IMR-90 (cell line): ENCODE measurements at regions of chr1 and their contacts with region 1.

Region 1: GRCh38 chr1:22976461-22977243 is 4.0 kb upstream of the LACTBL1 start:
- DNase-seq: peak; percentile 85
- ATAC-seq: peak; percentile 98
- H3K4me3 ChIP-seq: no peak overlapping the region
- H3K27ac ChIP-seq: no peak overlapping the region
- H3K4me1 ChIP-seq: no peaks in the 10 kb centered on the region; the same call in 1 of the 2 replicates
- H3K27me3 ChIP-seq: peaks cover 28% of the 10 kb centered on the region
- CTCF ChIP-seq: peak; percentile 88
- POLR2A ChIP-seq: 0 out of 2 replicates have a peak, but pooled peaks have one; percentile 33
- RAD21 ChIP-seq: peak; percentile 92

Region 2: DNA sequence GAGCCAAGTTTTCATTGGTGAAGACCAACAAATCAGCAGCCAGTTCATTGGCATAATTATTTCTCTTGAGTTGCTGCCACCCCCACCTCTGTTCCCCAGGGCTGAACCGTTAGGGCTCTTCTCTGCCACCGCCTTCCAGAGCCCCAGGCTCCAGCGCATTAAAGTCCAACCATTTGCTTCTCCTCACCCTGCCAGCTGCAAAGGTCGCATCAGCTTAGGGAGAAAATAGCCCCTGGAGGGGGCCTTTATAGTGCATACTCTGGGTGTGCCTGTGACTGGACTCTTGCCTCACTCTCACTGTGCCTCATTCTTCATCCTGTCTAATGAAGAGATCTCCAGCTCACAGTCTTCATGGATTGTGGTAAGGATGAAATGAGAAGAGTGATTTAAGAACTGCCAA is 93.0 kb after region 1 on chr1:
- CTCF ChIA-PET with region 1: no interaction called
- POLR2A ChIA-PET with region 1: no interaction called
- dilution Hi-C with region 1: no loop called
- in situ Hi-C with region 1: no loop called
- intact Hi-C with region 1: loop called (anchors 5 kb)
- DNase-seq: no peak
- ATAC-seq: no peak
- H3K4me3 ChIP-seq: no peak overlapping the region
- H3K27ac ChIP-seq: no peak overlapping the region
- H3K4me1 ChIP-seq: no peaks in the 10 kb centered on the region
- H3K27me3 ChIP-seq: no peaks in the 10 kb centered on the region
- CTCF ChIP-seq: no peak
- POLR2A ChIP-seq: no peak
- RAD21 ChIP-seq: no peak

Region 3: GRCh38 chr1:23092447-23092846 is 115.8 kb after region 1 on chr1:
- CTCF ChIA-PET with region 1: no interaction called
- POLR2A ChIA-PET with region 1: no interaction called
- dilution Hi-C with region 1: no loop called
- in situ Hi-C with region 1: no loop called
- intact Hi-C with region 1: no loop called
- DNase-seq: no peak
- ATAC-seq: no peak
- H3K4me3 ChIP-seq: no peak overlapping the region
- H3K27ac ChIP-seq: no peak overlapping the region
- H3K4me1 ChIP-seq: peaks cover 2% of the 10 kb centered on the region; the same call in 1 of the 2 replicates
- H3K27me3 ChIP-seq: no peaks in the 10 kb centered on the region
- CTCF ChIP-seq: no peak
- POLR2A ChIP-seq: no peak
- RAD21 ChIP-seq: no peak

Region 4: DNA sequence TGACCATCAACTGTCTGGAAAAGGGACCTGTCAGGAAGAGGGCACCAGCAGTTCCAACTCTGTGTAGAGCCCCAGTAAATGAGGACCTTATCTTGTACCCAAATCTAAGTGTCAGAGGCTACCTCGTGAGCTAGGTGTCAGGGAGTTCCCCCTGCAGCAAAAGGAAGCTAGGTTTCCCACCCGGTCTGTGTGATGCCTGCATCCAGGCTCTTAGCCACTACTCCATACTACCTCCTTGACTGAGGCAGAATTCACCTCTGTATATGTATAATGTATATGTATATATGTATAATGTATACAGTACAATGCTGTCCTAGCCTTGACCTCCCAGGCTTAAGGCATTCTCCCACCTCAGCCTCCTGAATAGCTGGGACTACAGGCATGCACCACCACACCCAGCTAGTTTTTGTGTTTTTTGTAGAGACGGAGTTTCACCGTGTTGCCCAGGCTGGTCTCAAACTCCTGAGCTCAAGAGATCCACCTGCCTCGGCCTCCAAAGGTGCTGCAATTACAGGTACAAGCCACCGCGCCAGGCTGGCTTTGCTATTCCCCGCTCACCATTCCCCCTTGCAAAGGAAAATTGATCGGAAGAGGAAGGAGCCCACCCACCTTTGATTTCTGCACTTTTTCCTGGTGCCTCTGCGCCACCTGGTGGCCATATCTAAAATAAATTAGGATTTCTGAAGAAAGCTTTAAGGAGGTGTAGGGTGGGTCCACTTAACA is 207.7 kb after region 1 on chr1:
- CTCF ChIA-PET with region 1: interaction called, 7 read pairs
- POLR2A ChIA-PET with region 1: no interaction called
- dilution Hi-C with region 1: no loop called
- in situ Hi-C with region 1: loop called (anchors 5 kb)
- intact Hi-C with region 1: loop called (anchors 1 kb)
- DNase-seq: peak; percentile 41
- ATAC-seq: peak; percentile 51; the same call in 1 of the 2 replicates
- H3K4me3 ChIP-seq: no peak overlapping the region
- H3K27ac ChIP-seq: no peak overlapping the region
- H3K4me1 ChIP-seq: 0 out of 2 replicates have a peak, but pooled peaks cover 4% of the 10 kb centered on the region
- H3K27me3 ChIP-seq: no peaks in the 10 kb centered on the region
- CTCF ChIP-seq: peak; percentile 72
- POLR2A ChIP-seq: no peak
- RAD21 ChIP-seq: peak; percentile 83

Region 5: GRCh38 chr1:23282957-23283356 is 306.3 kb after region 1 on chr1:
- CTCF ChIA-PET with region 1: no interaction called
- POLR2A ChIA-PET with region 1: no interaction called
- dilution Hi-C with region 1: no loop called
- in situ Hi-C with region 1: loop called (anchors 5 kb)
- intact Hi-C with region 1: no loop called
- DNase-seq: peak; percentile 79
- ATAC-seq: peak; percentile 72
- H3K4me3 ChIP-seq: no peak overlapping the region
- H3K27ac ChIP-seq: peak overlapping the region; percentile 2; the same call in 1 of the 2 replicates
- H3K4me1 ChIP-seq: peaks cover 8% of the 10 kb centered on the region; the same call in 1 of the 2 replicates
- H3K27me3 ChIP-seq: no peaks in the 10 kb centered on the region
- CTCF ChIP-seq: no peak
- POLR2A ChIP-seq: no peak
- RAD21 ChIP-seq: no peak

Region 6: GRCh38 chr1:23444104-23444533 is 467.5 kb after region 1 on chr1:
- CTCF ChIA-PET with region 1: no interaction called
- POLR2A ChIA-PET with region 1: no interaction called
- dilution Hi-C with region 1: no loop called
- in situ Hi-C with region 1: no loop called
- intact Hi-C with region 1: no loop called
- DNase-seq: peak; percentile 72
- ATAC-seq: peak; percentile 64
- H3K4me3 ChIP-seq: no peak overlapping the region
- H3K27ac ChIP-seq: peak overlapping the region; percentile 68; the same call in 1 of the 2 replicates
- H3K4me1 ChIP-seq: peaks cover 2% of the 10 kb centered on the region; the same call in 1 of the 2 replicates
- H3K27me3 ChIP-seq: no peaks in the 10 kb centered on the region
- CTCF ChIP-seq: no peak
- POLR2A ChIP-seq: no peak
- RAD21 ChIP-seq: no peak

Region 7: GRCh38 chr1:23475134-23475628 is 498.5 kb after region 1 on chr1:
- CTCF ChIA-PET with region 1: no interaction called
- POLR2A ChIA-PET with region 1: no interaction called
- dilution Hi-C with region 1: no loop called
- in situ Hi-C with region 1: no loop called
- intact Hi-C with region 1: no loop called
- DNase-seq: peak; percentile 98
- ATAC-seq: peak; percentile 77
- H3K4me3 ChIP-seq: no peak overlapping the region
- H3K27ac ChIP-seq: peak overlapping the region; percentile 42; the same call in 1 of the 2 replicates
- H3K4me1 ChIP-seq: peaks cover 17% of the 10 kb centered on the region
- H3K27me3 ChIP-seq: no peaks in the 10 kb centered on the region
- CTCF ChIP-seq: no peak
- POLR2A ChIP-seq: no peak
- RAD21 ChIP-seq: no peak

Region 8: GRCh38 chr1:23539698-23540266 is 563.1 kb after region 1 on chr1:
- CTCF ChIA-PET with region 1: no interaction called
- POLR2A ChIA-PET with region 1: no interaction called
- dilution Hi-C with region 1: no loop called
- in situ Hi-C with region 1: loop called (anchors 10 kb)
- intact Hi-C with region 1: loop called (anchors 1 kb)
- DNase-seq: peak; percentile 88
- ATAC-seq: peak; percentile 89
- H3K4me3 ChIP-seq: no peak overlapping the region
- H3K27ac ChIP-seq: no peak overlapping the region
- H3K4me1 ChIP-seq: peaks cover 4% of the 10 kb centered on the region; the same call in 1 of the 2 replicates
- H3K27me3 ChIP-seq: no peaks in the 10 kb centered on the region
- CTCF ChIP-seq: peak; percentile 95
- POLR2A ChIP-seq: no peak
- RAD21 ChIP-seq: peak; percentile 92